ENCODE measurements at regions of chr3 and their contacts with region 1.

Region 1: DNA sequence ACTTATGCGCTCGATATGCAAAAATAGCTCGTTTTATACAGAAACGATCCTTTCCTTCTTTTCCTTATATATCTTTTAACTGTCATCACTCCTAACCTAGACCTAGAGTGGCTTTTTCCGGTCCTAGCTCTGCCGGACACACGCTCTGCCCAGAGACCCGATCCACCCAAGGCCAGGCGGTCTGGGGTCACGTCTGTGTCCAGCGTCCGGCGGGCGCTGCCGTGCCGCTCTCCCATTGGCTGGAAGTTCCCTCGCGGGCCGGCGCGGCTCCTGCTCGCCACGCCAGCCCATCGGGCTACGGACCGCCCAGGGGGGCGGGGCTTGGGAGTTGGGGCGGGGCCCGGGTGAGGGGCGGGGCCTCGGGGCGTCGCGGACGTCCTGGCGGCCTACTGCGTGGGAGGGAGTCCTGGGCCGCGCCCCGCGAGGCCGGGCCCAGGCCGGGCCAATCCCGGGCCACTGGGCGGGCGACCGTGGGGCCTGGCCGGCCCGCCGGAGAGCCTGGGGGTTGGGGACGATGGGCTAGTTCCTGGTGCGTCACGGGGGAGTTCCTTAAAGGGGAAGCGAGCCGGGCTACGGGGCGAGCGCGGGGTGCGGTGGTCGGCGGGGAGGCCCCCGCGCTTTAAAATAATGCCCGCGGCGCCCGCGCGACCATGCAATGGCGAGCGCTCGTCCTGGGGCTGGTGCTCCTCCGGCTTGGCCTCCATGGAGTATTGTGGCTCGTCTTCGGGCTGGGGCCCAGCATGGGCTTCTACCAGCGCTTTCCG is at the start of gene EDEM1:
- DNase-seq: peak; percentile 93
- H3K4me3 ChIP-seq: peak within 1 kb of the TSS; percentile 88 to 100 (median 94)
- H3K27ac ChIP-seq: peak within 1 kb of the TSS; percentile 95 to 100 (median 98)
- H3K4me1 ChIP-seq: peaks cover 5 to 65% (median 13%) of the 10 kb centered on the region in 3 donors
- H3K27me3 ChIP-seq: no peaks in the 10 kb centered on the region
- CTCF ChIP-seq: peak in 1 of 6 experiments; percentile 6
- POLR2A ChIP-seq: peak in 3 of 4 donors; percentile 85 to 95 (median 87)
- total RNA-seq, gene EDEM1: 25.0 to 56.6 (median 40.2) TPM

Region 2: GRCh38 chr3:5122030-5122740 is 65.2 kb before region 1 on chr3 and contains the start of gene ARL8B:
- intact Hi-C with region 1: loop called (anchors 5 kb)
- DNase-seq: peak; percentile 40
- H3K4me3 ChIP-seq: peak within 1 kb of the TSS; percentile 97 to 100 (median 100)
- H3K27ac ChIP-seq: peak within 1 kb of the TSS; percentile 97 to 100 (median 97)
- H3K4me1 ChIP-seq: peaks cover 20 to 49% (median 34%) of the 10 kb centered on the region in 3 donors
- H3K27me3 ChIP-seq: no peaks in the 10 kb centered on the region
- CTCF ChIP-seq: peak; percentile 90 to 98 (median 97)
- POLR2A ChIP-seq: peak in 2 of 4 donors; percentile 71 to 90
- total RNA-seq, gene ARL8B: 42.9 to 71.9 (median 51.7) TPM